Posterior vena cava (tissue), 2 donors: ENCODE measurements at regions of chr16 and their contacts with region 1.

Region 1: GRCh38 chr16:82544378-82545160 is 82.2 kb upstream of the CDH13 start:
- DNase-seq: no peak

Region 2: GRCh38 chr16:82368041-82368440 is 176.5 kb before region 1 on chr16:
- intact Hi-C with region 1: no loop called
- DNase-seq: no peak

Region 3: GRCh38 chr16:82524976-82525375 is 19.6 kb before region 1 on chr16:
- intact Hi-C with region 1: loop called in 1 of 2 experiments (anchors 1 kb)
- DNase-seq: no peak

Region 4: DNA sequence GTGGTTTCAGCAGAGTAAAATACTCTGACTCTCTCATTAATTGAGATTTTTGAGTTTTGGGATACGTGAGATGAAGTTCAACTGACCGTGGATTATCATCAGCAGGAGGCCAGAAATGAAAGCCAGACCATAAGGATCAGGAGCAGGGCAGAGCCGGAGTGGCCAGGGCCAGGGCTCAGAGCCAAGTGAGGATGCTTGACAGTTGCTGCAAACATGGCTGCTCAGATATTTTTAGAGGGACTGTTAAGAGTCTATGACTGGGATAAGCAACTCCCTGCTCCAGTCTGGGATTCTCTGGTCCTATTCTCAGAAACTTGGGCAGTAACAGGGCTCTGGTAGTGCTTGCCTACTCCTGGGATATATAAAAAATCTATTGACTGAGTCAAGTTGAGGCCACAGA is 64.6 kb after region 1 on chr16:
- intact Hi-C with region 1: no loop called
- DNase-seq: peak; percentile 41

Region 5: DNA sequence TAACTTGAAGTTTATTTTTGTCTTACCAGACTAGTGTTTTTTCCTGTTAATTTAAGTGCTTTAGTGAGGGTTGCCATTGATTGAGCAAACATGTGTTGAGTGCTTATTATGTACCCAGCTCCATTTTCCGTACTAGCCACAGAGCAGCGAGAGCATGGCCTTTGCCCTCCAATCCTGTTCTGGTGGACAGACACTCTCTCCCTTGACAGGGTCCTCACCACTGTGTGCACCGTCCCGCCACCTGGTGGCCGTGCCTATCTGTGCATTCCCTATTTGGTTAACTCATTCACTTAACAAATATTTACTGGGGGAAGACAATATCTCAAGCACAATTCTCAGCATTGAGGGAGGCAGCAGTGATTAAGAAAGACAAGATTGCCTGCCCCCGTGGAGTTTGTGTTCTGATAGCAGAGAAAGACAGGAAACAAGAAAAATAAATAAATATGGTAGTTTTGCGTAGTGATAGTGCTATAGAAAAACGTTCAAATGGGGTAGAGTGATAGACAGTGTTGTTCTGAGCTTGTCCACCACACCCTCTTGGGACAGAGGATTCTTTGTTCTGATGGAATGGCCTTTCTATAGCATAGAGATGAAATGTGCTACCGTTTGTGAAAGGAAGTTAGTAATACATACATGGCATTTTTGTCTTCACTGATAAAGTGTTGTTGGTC is 95.2 kb after region 1 on chr16:
- intact Hi-C with region 1: no loop called
- DNase-seq: no peak

Region 6: GRCh38 chr16:82874271-82874670 is 329.7 kb after region 1 on chr16:
- intact Hi-C with region 1: no loop called
- DNase-seq: no peak